ENCODE measurements at regions of chr15 and their contacts with region 1.

Region 1: GRCh38 chr15:92808978-92809879 is 90.9 kb upstream of the CHD2 start:
- DNase-seq: peak; percentile 100
- ATAC-seq: peak; percentile 93
- H3K4me3 ChIP-seq: peak overlapping the region; percentile 65
- H3K27ac ChIP-seq: peak overlapping the region; percentile 99
- H3K4me1 ChIP-seq: peaks cover 45% of the 10 kb centered on the region
- H3K27me3 ChIP-seq: no peaks in the 10 kb centered on the region
- CTCF ChIP-seq: peak; percentile 99

Region 2: DNA sequence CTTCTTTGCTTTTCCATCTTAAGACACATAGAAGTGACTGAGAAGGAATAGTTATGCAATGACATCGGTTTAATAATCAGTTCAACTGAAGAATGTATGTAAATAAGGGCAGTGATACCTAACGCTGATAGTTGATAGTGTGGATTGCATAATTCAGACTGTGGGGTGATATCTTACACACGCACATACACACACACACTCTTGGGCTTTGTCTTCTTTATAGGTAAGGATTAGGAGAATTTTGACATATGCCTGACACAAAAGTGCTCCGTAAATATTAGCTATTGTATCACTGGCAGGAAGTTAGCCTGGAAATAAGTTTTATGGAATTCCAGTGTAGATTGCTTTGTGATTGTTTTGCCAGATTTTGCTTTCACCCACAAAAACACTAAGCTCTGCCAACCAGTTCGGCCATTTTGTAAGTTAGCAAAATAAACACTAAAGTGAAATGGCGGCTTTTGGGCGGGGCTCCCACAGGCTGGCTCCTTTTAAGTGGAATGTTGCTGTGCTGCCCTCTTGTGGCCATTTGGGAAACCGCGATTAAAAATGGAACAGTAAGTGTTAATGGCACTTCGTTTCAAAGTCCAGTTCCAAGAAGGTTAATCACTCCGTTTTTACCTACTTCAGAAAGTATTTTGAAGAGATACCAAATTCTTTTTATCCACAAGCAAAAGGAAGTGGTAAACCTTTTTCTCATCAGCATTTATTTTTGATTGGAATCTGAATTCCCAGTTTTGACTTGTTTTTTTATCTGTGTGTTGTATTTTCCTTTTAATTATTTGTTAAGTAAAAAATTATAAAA is 108.6 kb after region 1 on chr15:
- intact Hi-C with region 1: loop called (anchors 10 kb)
- DNase-seq: peak; percentile 90
- ATAC-seq: peak; percentile 87
- H3K4me3 ChIP-seq: peak overlapping the region; percentile 14
- H3K27ac ChIP-seq: peak overlapping the region; percentile 83
- H3K4me1 ChIP-seq: peaks cover 92% of the 10 kb centered on the region
- H3K27me3 ChIP-seq: no peaks in the 10 kb centered on the region
- CTCF ChIP-seq: peak; percentile 90

Measured in upper lobe of right lung (tissue), 1 donor.